Activated B cell treated with CpG ODN at 0.5 μM for 24 hours (primary cell): ENCODE measurements at regions of chr18 and their contacts with region 1.

Region 1: DNA sequence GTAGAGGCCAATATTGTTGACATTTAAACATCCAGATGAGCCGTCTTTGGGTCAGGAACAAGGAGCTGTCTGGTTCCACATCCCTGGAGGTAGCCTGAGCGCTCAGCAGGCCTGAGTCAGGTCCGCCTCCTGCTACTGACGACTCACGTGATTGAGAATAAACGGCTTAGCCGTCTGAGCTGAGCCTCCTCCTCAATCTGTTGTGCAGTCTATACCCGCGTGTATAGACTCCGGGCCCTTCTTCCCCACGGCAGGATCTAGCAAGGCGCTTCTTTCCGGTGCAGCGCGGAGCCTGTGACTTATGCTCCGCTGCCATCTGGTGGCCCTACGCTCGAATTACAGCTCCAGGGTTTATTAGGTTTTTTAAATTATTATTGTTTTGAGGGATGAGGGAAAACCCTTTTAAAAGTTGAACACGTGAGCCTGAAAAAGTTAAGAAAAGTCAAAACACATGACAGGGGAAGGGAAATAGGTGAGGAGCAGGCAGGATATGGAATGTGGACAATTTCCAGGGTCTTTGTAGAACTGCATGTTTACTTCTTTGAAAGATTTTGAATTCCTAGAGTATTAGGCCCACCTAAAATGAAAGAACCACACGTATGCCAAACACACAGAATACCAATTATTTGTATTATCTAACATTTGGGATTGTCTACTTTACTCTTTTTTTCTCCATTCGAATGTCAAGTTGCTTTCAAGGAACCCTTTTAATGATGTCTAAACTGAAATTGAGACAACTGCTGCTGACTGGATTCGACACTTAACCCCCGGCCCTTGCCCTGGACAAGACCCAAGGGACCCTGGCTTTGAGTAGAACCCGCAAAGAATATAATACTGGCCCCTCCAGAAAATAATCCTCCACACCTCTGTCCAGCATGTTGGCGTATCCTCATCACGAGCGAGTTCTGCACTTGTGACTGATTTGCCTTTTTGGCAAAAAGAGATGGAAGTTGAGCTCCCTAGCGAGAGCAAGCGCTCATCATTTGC is 112.4 kb upstream of the ZNF236 start:
- DNase-seq: peak; percentile 34
- ATAC-seq: peak; percentile 79
- H3K4me3 Mint-ChIP-seq: no peak overlapping the region
- H3K27ac Mint-ChIP-seq: no peak overlapping the region
- H3K4me1 Mint-ChIP-seq: peaks cover 2% of the 10 kb centered on the region
- H3K27me3 Mint-ChIP-seq: no peaks in the 10 kb centered on the region
- CTCF ChIP-seq: no peak

Region 2: DNA sequence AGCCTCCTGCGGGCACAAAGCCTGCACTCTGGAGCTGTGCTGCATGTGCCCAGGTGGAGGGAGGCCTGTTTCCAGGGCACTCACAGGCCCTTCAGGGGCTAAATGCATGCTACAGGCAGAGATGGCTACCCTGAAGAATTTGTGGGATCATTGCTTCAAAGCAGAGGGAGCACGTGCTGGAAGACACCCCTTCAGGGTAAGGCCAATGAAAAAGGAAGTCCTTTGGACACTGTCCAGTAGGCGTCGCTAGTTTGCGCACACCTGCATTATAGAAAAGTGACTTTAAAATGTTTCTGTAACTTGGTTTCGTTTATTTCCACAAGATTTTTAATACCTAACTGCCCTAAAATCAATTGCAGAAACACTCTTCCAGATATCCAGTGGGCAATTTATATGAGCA is 540.2 kb before region 1 on chr18:
- CTCF ChIA-PET with region 1: no interaction called
- POLR2A ChIA-PET with region 1: no interaction called
- intact Hi-C with region 1: loop called (anchors 10 kb)
- DNase-seq: no peak
- ATAC-seq: no peak
- H3K4me3 Mint-ChIP-seq: no peak overlapping the region
- H3K27ac Mint-ChIP-seq: no peak overlapping the region
- H3K4me1 Mint-ChIP-seq: no peaks in the 10 kb centered on the region
- H3K27me3 Mint-ChIP-seq: no peaks in the 10 kb centered on the region
- CTCF ChIP-seq: no peak

Region 3: DNA sequence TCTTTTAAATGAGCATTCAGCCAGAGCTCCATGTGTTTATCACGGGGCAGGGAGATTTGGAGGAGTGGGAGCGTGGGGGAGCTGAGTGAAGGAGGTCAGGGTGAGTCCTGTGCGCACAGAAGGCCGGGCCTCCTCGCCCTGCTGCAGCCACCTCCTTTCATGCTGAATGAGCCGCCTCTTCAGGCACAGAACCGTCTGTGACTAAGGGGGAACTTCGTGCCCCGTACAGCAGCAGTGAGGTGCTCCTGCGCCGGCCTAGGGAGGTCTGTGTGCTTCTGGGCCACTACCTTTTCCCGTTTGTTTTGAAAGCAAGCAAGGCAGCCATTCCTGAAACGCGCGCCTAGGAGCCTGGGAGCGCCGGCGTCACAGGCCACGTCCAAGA is 187.8 kb before region 1 on chr18:
- CTCF ChIA-PET with region 1: no interaction called
- POLR2A ChIA-PET with region 1: no interaction called
- intact Hi-C with region 1: no loop called
- DNase-seq: no peak
- ATAC-seq: no peak
- H3K4me3 Mint-ChIP-seq: no peak overlapping the region
- H3K27ac Mint-ChIP-seq: no peak overlapping the region
- H3K4me1 Mint-ChIP-seq: peaks cover 17% of the 10 kb centered on the region
- H3K27me3 Mint-ChIP-seq: peaks cover 26% of the 10 kb centered on the region
- CTCF ChIP-seq: no peak

Region 4: GRCh38 chr18:76546088-76546435 is 163.9 kb before region 1 on chr18:
- CTCF ChIA-PET with region 1: no interaction called
- POLR2A ChIA-PET with region 1: no interaction called
- intact Hi-C with region 1: loop called (anchors 10 kb)
- DNase-seq: no peak
- ATAC-seq: no peak
- H3K4me3 Mint-ChIP-seq: no peak overlapping the region
- H3K27ac Mint-ChIP-seq: no peak overlapping the region
- H3K4me1 Mint-ChIP-seq: no peaks in the 10 kb centered on the region
- H3K27me3 Mint-ChIP-seq: peaks cover 10% of the 10 kb centered on the region
- CTCF ChIP-seq: no peak

Region 5: GRCh38 chr18:76620321-76621170 is 89.4 kb before region 1 on chr18:
- CTCF ChIA-PET with region 1: no interaction called
- POLR2A ChIA-PET with region 1: no interaction called
- intact Hi-C with region 1: loop called (anchors 1 kb)
- DNase-seq: peak; percentile 27
- ATAC-seq: peak; percentile 62
- H3K4me3 Mint-ChIP-seq: no peak overlapping the region
- H3K27ac Mint-ChIP-seq: no peak overlapping the region
- H3K4me1 Mint-ChIP-seq: peaks cover 7% of the 10 kb centered on the region
- H3K27me3 Mint-ChIP-seq: peaks cover 35% of the 10 kb centered on the region
- CTCF ChIP-seq: no peak

Region 6: DNA sequence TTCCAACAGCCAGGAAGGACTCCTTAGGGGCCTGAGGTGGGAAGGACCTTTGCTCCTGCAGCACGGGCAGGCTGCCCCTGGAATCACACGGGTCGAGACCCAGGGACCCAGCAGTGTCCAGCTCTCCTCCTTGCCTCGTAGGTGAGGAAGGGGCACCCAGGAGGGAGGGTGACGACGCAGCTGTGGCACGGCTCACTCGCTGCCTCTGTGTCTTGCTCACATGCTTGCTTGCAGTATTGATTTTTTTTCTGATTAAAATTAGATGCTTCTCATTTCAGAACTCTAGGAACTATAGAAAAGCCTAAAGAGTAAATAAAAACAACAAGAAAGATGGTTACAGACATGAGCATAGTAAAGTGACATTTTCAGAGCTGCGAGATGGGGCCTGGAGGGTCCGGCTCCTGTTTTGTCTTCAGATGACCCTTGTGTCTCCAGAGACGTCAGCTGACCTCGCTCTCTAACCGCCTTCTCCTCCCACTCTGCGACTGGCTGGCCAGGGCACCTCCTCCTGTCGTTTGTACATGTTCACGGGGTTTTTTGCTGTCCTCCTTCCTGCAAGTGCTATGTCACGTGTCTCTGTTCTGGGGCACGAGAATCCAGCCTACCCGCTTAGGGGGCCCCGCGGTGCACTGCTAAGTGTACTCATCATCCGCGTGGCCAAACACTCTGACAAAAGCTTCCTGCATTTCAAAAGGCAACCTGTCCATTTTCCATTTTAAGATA is 46.7 kb after region 1 on chr18:
- CTCF ChIA-PET with region 1: no interaction called
- POLR2A ChIA-PET with region 1: no interaction called
- intact Hi-C with region 1: no loop called
- DNase-seq: no peak
- ATAC-seq: no peak
- H3K4me3 Mint-ChIP-seq: no peak overlapping the region
- H3K27ac Mint-ChIP-seq: no peak overlapping the region
- H3K4me1 Mint-ChIP-seq: no peaks in the 10 kb centered on the region
- H3K27me3 Mint-ChIP-seq: no peaks in the 10 kb centered on the region
- CTCF ChIP-seq: no peak